K562 (cell line): ENCODE measurements at regions of chr4 and their contacts with region 1.

Region 1: GRCh38 chr4:153573881-153574802 is 108.0 kb downstream of the TMEM131L start:
- DNase-seq: peak in 2 of 4 experiments; percentile 22 to 48
- ATAC-seq: peak; percentile 87
- H3K4me3 ChIP-seq: no peak overlapping the region
- H3K27ac ChIP-seq: no peak overlapping the region
- H3K4me1 ChIP-seq: peaks cover 0 to 5% of the 10 kb centered on the region in 2 experiments; a peak in 1 of 5 replicates
- H3K27me3 ChIP-seq: no peaks in the 10 kb centered on the region
- CTCF ChIP-seq: peak; percentile 49 to 75 (median 50); a peak in 5 of 6 replicates
- EP300 ChIP-seq: no peak
- POLR2A ChIP-seq: no peak
- RAD21 ChIP-seq: peak; percentile 80 to 90

Region 2: DNA sequence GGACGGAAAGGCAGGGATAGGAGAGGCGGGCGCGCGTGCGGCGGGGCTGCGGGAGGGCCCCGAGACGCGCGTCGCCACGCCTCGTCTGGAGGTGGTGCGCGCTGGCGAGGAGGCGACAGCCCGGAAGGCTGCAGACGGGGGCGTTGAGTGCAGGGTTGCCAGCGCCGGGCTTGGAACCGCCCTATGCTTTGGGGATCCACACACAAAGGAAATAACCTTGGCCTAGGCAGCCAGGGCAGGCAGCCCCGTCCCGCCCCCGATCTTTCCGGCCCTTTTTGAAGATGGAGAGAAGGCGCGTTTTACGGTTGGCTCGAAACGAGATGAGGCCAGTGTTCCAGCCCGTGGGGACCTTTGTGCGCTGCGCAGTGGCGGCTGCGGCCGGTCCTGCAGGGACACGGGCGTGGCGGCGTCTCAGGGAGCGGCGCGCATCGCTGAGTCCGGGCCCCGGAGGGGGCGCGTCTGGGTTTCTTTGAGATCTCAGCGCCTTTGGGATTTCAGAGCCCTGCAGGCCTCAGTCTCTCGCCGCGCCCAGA is 420.7 kb before region 1 on chr4:
- CTCF ChIA-PET with region 1: no interaction called
- POLR2A ChIA-PET with region 1: no interaction called
- in situ Hi-C with region 1: loop called (anchors 10 kb)
- intact Hi-C with region 1: no loop called
- DNase-seq: peak in 1 of 4 experiments; percentile 8
- ATAC-seq: peak; percentile 72
- H3K4me3 ChIP-seq: peak overlapping the region; percentile 11; the same call in 1 of the 2 replicates
- H3K27ac ChIP-seq: no peak overlapping the region
- H3K4me1 ChIP-seq: peaks cover 11 to 12% of the 10 kb centered on the region in 2 experiments
- H3K27me3 ChIP-seq: peaks cover 25 to 35% of the 10 kb centered on the region in 2 experiments; a peak in 4 of 5 replicates
- CTCF ChIP-seq: no peak
- EP300 ChIP-seq: no peak
- POLR2A ChIP-seq: no peak
- RAD21 ChIP-seq: no peak

Region 3: DNA sequence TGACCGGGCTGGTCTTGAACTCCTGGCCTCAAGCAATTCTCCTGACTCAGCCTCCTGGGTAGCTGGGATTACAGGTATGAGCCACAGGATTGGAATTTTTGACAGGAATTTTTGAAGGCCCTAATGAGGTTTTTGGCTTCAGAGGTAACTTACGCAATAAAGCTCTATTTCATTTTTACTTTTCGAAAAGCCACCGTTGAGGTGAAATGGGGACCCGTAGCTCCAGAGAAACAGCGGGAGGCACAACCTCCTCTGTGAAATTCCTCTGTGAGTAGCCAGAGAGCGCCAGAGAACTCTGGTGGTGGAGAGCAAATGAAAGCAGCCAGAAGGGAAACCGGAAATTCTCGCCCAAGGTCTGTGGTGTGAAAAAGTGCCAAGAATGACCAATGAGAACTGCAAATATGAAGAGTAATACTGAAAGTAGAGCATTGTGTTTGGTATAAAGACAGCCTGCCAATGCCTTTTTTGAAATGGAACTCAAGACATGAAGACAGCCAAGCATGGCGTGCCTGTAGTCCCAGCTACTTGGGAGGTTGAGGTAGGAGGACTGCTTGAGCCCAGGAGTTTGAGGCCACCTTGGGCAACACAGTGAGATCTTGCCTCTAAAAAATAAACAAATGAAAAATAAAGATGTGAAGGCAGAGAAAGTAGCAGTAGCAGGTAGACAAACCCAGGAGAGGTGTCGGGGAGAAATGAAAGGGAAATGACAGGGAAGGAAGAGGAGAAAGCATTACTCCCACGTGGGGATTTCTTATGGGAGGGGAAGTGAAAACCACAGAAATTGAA is 141.0 kb before region 1 on chr4:
- CTCF ChIA-PET with region 1: interaction called, 21 read pairs
- POLR2A ChIA-PET with region 1: interaction called, 3 read pairs
- in situ Hi-C with region 1: loop called (anchors 5 kb)
- intact Hi-C with region 1: loop called (anchors 1 kb)
- DNase-seq: peak; percentile 50 to 85 (median 70)
- ATAC-seq: peak; percentile 95
- H3K4me3 ChIP-seq: no peak overlapping the region
- H3K27ac ChIP-seq: peak overlapping the region; percentile 49; the same call in 1 of the 3 replicates
- H3K4me1 ChIP-seq: peaks cover 10 to 11% of the 10 kb centered on the region in 2 experiments; a peak in 4 of 5 replicates
- H3K27me3 ChIP-seq: no peaks in the 10 kb centered on the region
- CTCF ChIP-seq: peak; percentile 88 to 93 (median 88)
- EP300 ChIP-seq: no peak; the same call in 1 of the 2 replicates
- POLR2A ChIP-seq: no peak
- RAD21 ChIP-seq: peak; percentile 84 to 94

Region 4: DNA sequence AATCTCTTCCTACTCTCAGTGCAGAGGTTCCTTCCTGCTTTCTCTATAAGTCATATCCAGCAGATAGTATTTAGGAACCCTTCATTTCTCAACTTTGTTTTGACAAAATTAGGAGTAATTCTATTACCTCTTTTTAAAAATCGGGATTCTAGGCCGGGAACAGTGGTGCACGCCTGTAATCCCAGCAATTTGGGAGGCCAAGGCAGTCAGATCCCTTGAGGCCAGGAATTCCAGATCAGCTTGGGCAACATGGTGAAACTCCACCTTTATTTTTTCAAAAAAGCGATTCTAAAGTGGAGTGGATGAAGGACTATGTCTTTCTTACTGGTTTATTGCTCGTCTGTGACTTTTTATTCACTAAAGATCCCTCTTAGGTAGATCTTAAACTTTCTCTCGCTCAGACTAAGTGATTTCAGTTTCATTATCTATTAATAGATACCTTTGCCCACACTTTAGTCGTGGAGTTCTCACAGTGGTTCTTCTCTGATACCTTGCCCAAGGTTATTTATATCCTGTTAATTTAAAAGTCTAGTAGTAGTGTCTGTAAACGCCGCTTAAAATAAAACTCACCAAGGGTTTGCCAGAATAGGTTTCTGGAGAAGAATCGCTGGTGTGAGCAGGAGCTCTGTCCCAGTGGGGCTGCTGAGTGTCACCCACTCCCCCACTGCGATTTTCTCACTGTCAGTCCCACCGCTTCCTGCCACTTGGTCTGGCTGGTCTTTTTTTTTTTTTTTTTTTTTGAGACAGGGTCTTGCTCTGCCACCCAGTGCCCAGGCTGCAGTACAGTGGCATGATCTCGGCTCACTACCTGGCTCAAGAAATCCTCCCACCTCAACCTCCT is 135.0 kb before region 1 on chr4:
- CTCF ChIA-PET with region 1: no interaction called
- POLR2A ChIA-PET with region 1: no interaction called
- in situ Hi-C with region 1: loop called (anchors 5 kb)
- intact Hi-C with region 1: no loop called
- DNase-seq: no peak
- ATAC-seq: no peak
- H3K4me3 ChIP-seq: no peak overlapping the region
- H3K27ac ChIP-seq: no peak overlapping the region
- H3K4me1 ChIP-seq: peaks cover 0 to under 1% of the 10 kb centered on the region in 2 experiments; a peak in 2 of 5 replicates
- H3K27me3 ChIP-seq: no peaks in the 10 kb centered on the region
- CTCF ChIP-seq: no peak
- EP300 ChIP-seq: no peak
- POLR2A ChIP-seq: no peak
- RAD21 ChIP-seq: no peak

Region 5: DNA sequence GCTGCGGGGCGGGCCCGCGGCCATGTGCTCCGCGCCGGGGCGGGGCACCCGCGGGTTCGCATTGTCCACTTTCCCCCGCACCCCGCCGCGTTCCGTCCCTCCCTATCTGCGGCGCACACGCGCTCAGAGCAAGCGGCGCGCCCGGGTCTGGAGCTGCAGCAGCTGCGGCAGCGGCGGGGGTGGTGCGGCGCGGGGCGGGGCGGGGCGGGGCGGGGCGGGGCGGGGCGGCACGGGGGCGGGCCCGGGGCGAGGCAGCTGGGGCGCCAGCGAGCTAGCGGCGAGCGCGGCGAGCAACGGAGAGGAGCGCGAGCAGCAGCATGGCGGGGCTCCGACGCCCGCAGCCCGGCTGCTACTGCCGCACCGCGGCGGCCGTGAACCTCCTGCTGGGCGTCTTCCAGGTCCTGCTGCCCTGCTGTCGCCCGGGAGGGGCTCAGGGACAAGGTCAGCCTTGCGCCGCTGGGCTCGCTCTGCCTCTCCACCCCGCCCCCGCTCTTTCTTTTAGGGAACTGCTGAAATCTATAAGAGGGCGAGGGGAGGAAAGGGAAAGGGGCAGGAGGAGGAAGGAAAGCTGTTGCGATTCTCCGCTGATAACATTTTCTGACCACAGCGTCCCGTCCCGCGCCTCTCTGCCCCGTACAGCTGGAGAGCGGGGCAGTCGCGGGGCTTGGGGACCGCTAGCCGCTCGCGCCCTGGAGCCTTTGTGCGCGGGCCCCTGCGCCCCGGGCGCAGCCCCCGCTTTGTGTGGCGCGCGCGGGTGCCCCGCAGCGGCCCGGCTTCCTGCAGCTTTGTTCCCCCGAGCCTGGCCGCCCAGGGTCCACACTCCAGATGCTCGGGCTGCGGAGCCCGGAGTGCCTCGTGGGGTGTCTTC is 107.8 kb before region 1 on chr4 and contains the start of gene TMEM131L:
- CTCF ChIA-PET with region 1: interaction called, 3 read pairs
- POLR2A ChIA-PET with region 1: no interaction called
- in situ Hi-C with region 1: no loop called
- intact Hi-C with region 1: loop called (anchors 10 kb)
- DNase-seq: peak; percentile 91 to 94 (median 92)
- ATAC-seq: peak; percentile 82
- H3K4me3 ChIP-seq: peak within 1 kb of the TSS; percentile 83
- H3K27ac ChIP-seq: peak within 1 kb of the TSS; percentile 86
- H3K4me1 ChIP-seq: peaks cover 29 to 40% of the 10 kb centered on the region in 2 experiments
- H3K27me3 ChIP-seq: no peaks in the 10 kb centered on the region
- CTCF ChIP-seq: peak; percentile 30 to 68 (median 46); a peak in 3 of 6 replicates
- EP300 ChIP-seq: no peak; the same call in 1 of the 2 replicates
- POLR2A ChIP-seq: peak; percentile 78
- RAD21 ChIP-seq: peak in 1 of 2 experiments; percentile 41; a peak in 2 of 4 replicates
- polyA plus RNA-seq, gene TMEM131L: 1.2 to 1.6 TPM

Region 6: GRCh38 chr4:153643406-153644383 is 69.6 kb after region 1 on chr4:
- CTCF ChIA-PET with region 1: no interaction called
- POLR2A ChIA-PET with region 1: no interaction called
- in situ Hi-C with region 1: no loop called
- intact Hi-C with region 1: loop called (anchors 5 kb)
- DNase-seq: peak; percentile 44 to 57 (median 55)
- ATAC-seq: peak; percentile 83
- H3K4me3 ChIP-seq: no peak overlapping the region
- H3K27ac ChIP-seq: no peak overlapping the region
- H3K4me1 ChIP-seq: peaks cover 0 to 7% of the 10 kb centered on the region in 2 experiments; a peak in 3 of 5 replicates
- H3K27me3 ChIP-seq: no peaks in the 10 kb centered on the region
- CTCF ChIP-seq: peak; percentile 35 to 63 (median 53); a peak in 5 of 6 replicates
- EP300 ChIP-seq: no peak
- POLR2A ChIP-seq: no peak
- RAD21 ChIP-seq: peak; percentile 29 to 72; a peak in 3 of 4 replicates